CD4-positive, alpha-beta memory T cell (primary cell): ENCODE measurements at regions of chr7 and their contacts with region 1.

Region 1: DNA sequence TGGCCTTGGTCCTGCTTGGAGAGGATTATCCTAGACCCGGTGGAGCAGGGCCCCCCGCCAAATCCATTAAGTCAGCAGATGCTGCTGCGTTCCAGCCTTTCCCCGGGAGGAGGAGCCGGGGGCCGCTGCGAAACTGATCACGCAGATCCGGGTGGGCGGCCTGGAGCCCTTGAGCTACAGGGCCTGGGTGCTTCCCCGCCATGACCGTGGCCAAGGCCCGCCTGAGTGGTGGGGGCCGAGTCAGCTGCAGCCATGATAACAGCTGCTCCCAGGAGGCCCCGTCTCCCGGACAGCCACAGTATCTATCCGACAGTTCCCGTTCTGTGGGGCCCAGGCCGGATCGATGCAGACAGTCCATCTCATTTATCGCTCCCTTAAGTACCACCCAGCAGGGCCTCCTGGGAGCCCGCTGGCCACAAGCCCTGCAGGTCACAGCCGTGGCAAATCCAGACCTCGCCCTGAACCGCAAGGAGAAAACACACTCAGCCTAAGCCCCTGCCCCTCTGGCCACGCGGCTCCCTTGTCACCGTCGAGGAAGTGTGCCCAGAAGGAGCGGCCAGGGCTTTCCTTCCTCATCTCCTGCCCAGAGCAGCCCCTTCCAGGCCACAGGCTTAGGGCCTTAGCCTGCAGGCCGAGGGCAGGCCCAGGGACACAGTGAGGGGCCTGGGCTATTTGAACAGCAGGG is 34.4 kb upstream of the SLC29A4 start:
- DNase-seq: no peak
- H3K4me3 ChIP-seq: no peak overlapping the region
- H3K4me3 Mint-ChIP-seq: no peak overlapping the region
- H3K27ac ChIP-seq: no peak overlapping the region
- H3K27ac Mint-ChIP-seq: peak overlapping the region in 1 of 7 donors; percentile 22
- H3K4me1 ChIP-seq: no peaks in the 10 kb centered on the region
- H3K4me1 Mint-ChIP-seq: no peaks in the 10 kb centered on the region
- H3K27me3 ChIP-seq: no peaks in the 10 kb centered on the region
- H3K27me3 Mint-ChIP-seq: peaks cover 0 to 4% of the 10 kb centered on the region in 2 donors

Region 2: GRCh38 chr7:5333121-5334045 is 85.0 kb after region 1 on chr7:
- CTCF ChIA-PET with region 1: no interaction called
- POLR2A ChIA-PET with region 1: no interaction called
- intact Hi-C with region 1: loop called (anchors 10 kb)
- DNase-seq: no peak
- H3K4me3 ChIP-seq: no peak overlapping the region
- H3K4me3 Mint-ChIP-seq: peak overlapping the region in 1 of 8 donors; percentile 13
- H3K27ac ChIP-seq: no peak overlapping the region
- H3K27ac Mint-ChIP-seq: peak overlapping the region in 1 of 7 donors; percentile 61
- H3K4me1 ChIP-seq: peaks cover 22% of the 10 kb centered on the region
- H3K4me1 Mint-ChIP-seq: peaks cover 12 to 21% (median 19%) of the 10 kb centered on the region in 4 donors
- H3K27me3 ChIP-seq: no peaks in the 10 kb centered on the region
- H3K27me3 Mint-ChIP-seq: no peaks in the 10 kb centered on the region